Activated CD8-positive, alpha-beta T cell treated with anti-CD3 and anti-CD28 coated beads for 36 hours (primary cell): ENCODE measurements at regions of chr1 and their contacts with region 1.

Region 1: GRCh38 chr1:204516180-204516879 is at the start of gene MDM4:
- DNase-seq: peak; percentile 98
- ATAC-seq: peak; percentile 88
- H3K4me3 Mint-ChIP-seq: no peak within 1 kb of the TSS
- H3K27ac Mint-ChIP-seq: no peak within 1 kb of the TSS
- H3K4me1 Mint-ChIP-seq: peaks cover 55% of the 10 kb centered on the region
- H3K27me3 Mint-ChIP-seq: no peaks in the 10 kb centered on the region
- CTCF ChIP-seq: no peak
- total RNA-seq, gene MDM4: 89.6 to 94.8 TPM

Region 2: DNA sequence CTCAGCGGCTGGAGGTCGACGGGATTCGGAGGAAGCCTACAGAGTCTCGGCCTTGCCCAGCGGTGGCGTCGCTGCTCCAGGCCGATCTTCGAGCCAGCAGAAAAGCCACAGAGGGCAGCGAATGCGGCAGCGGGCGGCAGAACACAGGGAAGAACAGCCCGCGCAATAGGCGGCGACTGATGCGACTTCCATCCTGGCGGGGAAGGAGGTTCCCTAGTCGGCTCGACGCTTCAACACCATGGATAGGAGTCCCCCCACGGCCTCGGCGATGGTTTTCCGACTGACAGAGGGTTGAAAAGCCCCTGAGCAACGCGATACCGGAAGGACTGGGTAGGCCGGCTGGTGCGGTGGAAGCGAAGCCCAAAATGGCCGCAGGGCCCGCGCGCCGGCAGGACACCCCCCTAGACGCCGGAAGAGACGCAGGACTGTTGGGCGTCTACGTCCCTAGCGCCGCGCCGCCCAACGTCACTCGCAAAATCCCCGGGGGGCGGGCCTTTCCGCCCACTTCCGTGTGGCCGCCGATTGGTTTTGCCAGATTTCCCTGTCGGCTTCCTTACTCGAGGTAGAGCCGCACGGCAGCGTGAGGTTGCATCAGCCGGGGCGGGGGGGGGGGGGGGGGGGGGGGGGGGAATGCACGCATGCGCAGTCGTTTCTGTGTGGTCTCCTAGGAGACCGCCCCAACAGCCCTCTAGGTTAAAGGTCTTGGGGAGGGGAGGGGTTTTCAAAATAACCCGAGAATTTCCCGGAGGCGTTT is 104.7 kb before region 1 on chr1 and contains the start of gene PPP1R15B:
- CTCF ChIA-PET with region 1: no interaction called
- POLR2A ChIA-PET with region 1: interaction called, 11 read pairs
- intact Hi-C with region 1: no loop called
- DNase-seq: peak; percentile 97
- ATAC-seq: peak; percentile 92
- H3K4me3 Mint-ChIP-seq: peak within 1 kb of the TSS; percentile 99
- H3K27ac Mint-ChIP-seq: peak within 1 kb of the TSS; percentile 100
- H3K4me1 Mint-ChIP-seq: peaks cover 19% of the 10 kb centered on the region
- H3K27me3 Mint-ChIP-seq: no peaks in the 10 kb centered on the region
- CTCF ChIP-seq: no peak
- total RNA-seq, gene PPP1R15B: 63.8 to 64.6 TPM

Region 3: DNA sequence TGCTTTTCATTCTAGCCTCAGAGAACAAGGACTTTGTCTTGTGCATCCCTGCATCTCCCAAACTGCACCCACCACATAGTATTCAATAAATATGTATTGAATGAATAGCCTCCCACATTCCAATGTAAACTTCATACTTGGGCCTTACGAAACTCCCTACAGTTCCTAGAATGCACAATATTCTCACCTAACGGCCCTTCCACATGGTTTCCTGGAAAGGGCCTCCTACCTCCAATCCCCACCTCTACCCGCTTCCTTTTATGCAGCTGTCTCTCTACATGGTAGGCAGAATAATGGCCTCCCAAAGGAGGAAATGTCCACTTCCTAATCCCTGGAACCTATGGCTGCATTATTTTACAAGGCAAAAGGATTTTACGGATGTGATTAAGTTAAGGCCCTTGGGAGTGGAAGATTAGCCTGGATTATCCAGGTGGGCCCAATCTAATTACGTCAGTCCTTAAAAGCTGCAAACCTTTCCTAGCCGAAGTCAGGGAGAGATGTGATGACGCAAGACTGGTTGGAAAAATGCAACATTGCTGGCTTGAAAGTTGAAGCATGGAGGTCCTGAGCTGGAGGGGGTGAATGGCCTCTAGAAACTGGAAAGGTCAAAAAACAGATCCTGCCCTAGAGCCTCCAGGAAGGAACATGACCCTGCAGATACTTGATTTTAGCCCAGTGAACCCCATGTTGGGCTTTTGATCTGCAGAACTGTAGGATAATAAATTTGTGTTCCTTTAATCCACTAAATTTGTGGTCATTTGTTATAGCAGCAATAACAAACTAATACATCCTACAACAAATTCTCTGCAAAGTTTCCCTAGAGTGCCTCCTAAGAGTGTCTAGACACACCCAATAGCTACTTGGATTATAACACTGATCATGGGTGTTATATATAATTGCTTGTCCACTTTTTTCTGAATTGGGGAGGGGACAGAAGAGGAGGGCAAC is 16.5 kb before region 1 on chr1:
- CTCF ChIA-PET with region 1: interaction called, 12 read pairs
- POLR2A ChIA-PET with region 1: interaction called, 80 read pairs
- intact Hi-C with region 1: no loop called
- DNase-seq: no peak
- ATAC-seq: no peak
- H3K4me3 Mint-ChIP-seq: no peak overlapping the region
- H3K27ac Mint-ChIP-seq: no peak overlapping the region
- H3K4me1 Mint-ChIP-seq: peaks cover 27% of the 10 kb centered on the region
- H3K27me3 Mint-ChIP-seq: no peaks in the 10 kb centered on the region
- CTCF ChIP-seq: no peak

Region 4: DNA sequence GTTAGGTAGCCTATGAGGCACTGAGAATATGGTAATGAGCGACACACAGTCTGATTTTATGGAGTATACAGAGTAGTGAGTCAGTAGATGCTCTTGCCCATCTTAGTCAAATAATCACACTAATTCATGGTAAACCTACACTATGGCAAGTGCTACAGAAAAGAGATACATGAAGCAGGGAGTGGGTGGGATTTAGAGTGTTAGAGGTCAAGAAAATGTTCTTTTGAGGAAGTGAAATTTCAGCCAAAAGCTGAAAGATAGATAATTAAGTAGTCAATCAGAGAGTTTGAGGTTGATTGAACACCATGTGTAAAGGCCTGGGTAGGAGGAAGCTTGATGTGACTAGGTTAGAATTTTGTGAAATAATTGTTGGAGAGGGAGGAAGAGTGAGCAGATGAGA is 14.6 kb after region 1 on chr1:
- CTCF ChIA-PET with region 1: interaction called, 25 read pairs
- POLR2A ChIA-PET with region 1: interaction called, 11 read pairs
- intact Hi-C with region 1: no loop called
- DNase-seq: no peak
- ATAC-seq: peak; percentile 53
- H3K4me3 Mint-ChIP-seq: no peak overlapping the region
- H3K27ac Mint-ChIP-seq: peak overlapping the region; percentile 67
- H3K4me1 Mint-ChIP-seq: peaks cover 17% of the 10 kb centered on the region
- H3K27me3 Mint-ChIP-seq: no peaks in the 10 kb centered on the region
- CTCF ChIP-seq: no peak

Region 5: DNA sequence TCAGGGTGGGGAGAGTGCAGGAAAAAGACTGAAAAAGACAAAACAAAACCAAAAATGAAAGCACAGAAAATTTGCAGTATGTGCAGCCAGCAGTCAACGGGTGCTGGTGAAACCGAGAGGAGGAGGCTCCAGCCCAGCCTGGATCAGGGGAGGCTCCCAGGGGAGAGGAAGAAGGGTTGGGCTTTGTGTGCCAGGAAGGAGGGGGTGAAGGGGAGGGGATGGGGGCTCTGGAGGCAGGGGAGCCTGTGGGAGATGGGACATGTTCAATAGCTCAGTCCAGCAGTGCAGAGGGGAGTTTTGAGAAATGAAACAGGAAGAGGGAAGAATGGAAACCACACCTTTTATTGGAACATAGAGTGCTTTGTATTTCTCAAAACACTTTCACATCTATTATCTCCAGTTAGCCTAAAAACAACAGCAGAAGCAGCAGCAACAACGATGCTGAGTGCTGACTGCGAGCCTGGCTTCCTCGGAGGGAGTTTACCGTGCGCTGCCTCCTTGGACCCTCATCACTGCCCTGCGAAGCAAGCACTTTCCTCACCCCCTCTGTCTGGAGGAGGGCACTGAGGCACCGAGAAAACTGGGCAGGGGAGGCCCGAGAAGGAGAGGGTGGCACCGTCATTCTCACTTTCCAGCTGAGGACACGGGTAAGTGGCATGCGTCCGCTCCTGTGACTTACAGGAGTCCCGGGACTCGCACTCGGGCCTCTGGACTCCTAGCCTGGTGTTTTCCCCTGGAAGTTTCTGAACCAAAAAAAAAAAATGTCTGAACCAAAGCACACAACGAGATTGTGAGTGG is 62.7 kb after region 1 on chr1:
- CTCF ChIA-PET with region 1: no interaction called
- POLR2A ChIA-PET with region 1: no interaction called
- intact Hi-C with region 1: no loop called
- DNase-seq: peak; percentile 49
- ATAC-seq: peak; percentile 82
- H3K4me3 Mint-ChIP-seq: peak overlapping the region; percentile 62
- H3K27ac Mint-ChIP-seq: peak overlapping the region; percentile 88
- H3K4me1 Mint-ChIP-seq: peaks cover 24% of the 10 kb centered on the region
- H3K27me3 Mint-ChIP-seq: no peaks in the 10 kb centered on the region
- CTCF ChIP-seq: no peak